ENCODE measurements at regions of chr6 and their contacts with region 1.

Region 1: GRCh38 chr6:45436544-45437438 is 59.1 kb upstream of the SUPT3H start:
- DNase-seq: peak; percentile 77
- H3K4me3 Mint-ChIP-seq: peak overlapping the region; percentile 35
- H3K27ac Mint-ChIP-seq: peak overlapping the region; percentile 76
- H3K4me1 Mint-ChIP-seq: peaks cover 58% of the 10 kb centered on the region
- H3K27me3 Mint-ChIP-seq: no peaks in the 10 kb centered on the region

Region 2: DNA sequence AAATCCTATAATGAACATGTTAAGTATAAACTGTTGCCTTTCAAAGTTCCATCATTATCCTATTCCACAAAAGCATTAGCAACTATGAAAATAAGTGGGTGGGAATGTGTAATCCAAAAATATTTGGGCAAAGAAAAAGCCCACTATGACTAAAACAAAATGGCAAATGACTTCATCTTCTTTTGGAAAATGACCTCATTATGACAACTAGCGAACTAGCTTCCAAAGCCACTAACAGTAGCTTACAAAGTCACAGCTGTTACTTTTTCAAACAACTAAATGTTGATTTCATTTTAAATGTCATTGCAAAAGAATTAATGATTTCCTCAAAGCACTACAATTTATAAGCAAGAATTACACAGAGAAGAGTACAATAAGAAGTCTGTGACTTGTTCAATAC is 158.4 kb before region 1 on chr6:
- CTCF ChIA-PET with region 1: no interaction called
- intact Hi-C with region 1: no loop called
- DNase-seq: no peak
- H3K4me3 Mint-ChIP-seq: no peak overlapping the region
- H3K27ac Mint-ChIP-seq: no peak overlapping the region
- H3K4me1 Mint-ChIP-seq: peaks cover 3% of the 10 kb centered on the region
- H3K27me3 Mint-ChIP-seq: no peaks in the 10 kb centered on the region

Region 3: GRCh38 chr6:45486736-45487135 is 49.9 kb after region 1 on chr6:
- CTCF ChIA-PET with region 1: no interaction called
- intact Hi-C with region 1: loop called (anchors 1 kb)
- DNase-seq: peak; percentile 46
- H3K4me3 Mint-ChIP-seq: no peak overlapping the region
- H3K27ac Mint-ChIP-seq: peak overlapping the region; percentile 54
- H3K4me1 Mint-ChIP-seq: peaks cover 38% of the 10 kb centered on the region
- H3K27me3 Mint-ChIP-seq: no peaks in the 10 kb centered on the region

Region 4: GRCh38 chr6:45558858-45559257 is 122.1 kb after region 1 on chr6:
- CTCF ChIA-PET with region 1: no interaction called
- intact Hi-C with region 1: loop called (anchors 2 kb)
- DNase-seq: no peak
- H3K4me3 Mint-ChIP-seq: no peak overlapping the region
- H3K27ac Mint-ChIP-seq: no peak overlapping the region
- H3K4me1 Mint-ChIP-seq: peaks cover 22% of the 10 kb centered on the region
- H3K27me3 Mint-ChIP-seq: no peaks in the 10 kb centered on the region

Region 5: GRCh38 chr6:45590225-45590624 is 153.4 kb after region 1 on chr6:
- CTCF ChIA-PET with region 1: no interaction called
- intact Hi-C with region 1: loop called (anchors 2 kb)
- DNase-seq: no peak
- H3K4me3 Mint-ChIP-seq: no peak overlapping the region
- H3K27ac Mint-ChIP-seq: no peak overlapping the region
- H3K4me1 Mint-ChIP-seq: peaks cover 77% of the 10 kb centered on the region
- H3K27me3 Mint-ChIP-seq: no peaks in the 10 kb centered on the region

Measured in activated naive CD4-positive, alpha-beta T cell treated with anti-CD3 and anti-CD28 coated beads for 36 hours (primary cell).